GM12878 (cell line): ENCODE measurements at regions of chr2 and their contacts with region 1.

Region 1: DNA sequence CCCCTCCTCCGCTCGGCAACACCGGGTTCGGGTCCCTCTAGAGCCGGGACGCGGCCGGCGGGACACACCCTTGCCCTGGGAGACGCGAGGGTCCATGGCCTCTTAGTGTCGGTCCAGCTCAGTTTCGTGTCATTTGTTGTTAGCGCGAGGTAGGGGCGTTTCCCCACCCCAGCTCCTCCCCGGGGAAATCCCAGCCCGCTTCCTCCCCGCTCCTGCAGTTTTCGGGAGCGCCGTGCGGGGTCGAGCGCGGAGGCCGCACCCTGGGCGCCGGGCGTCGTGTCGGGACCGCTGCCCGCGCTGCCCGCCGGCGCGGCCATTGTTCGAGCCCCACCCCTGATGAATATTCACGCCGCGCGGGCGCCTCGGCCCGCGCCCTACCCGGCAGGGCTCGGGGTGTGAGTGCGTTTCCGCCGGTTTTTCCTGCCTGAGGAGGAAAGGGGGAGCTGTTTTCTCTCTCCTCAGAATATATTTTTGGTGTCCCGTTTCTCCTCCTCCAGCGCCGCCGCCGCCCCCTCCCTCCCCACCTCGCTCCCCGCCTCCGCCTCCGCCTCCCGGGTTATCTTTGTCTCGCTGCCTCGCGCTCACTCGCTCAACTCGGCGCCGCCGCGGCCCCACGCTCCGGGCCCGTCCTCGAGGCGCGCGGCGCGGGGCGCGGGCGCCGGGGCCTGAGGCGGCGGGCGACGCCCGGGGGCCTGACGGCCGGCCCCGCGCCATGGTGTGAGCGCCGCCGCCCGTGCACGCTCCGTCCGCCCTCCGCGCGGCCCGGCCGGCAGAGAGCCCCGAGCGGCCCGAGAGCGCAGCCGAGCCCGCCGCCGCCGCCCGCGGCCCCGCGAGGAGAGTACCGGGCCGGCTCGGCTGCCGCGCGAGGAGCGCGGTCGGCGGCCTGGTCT is at the start of gene MAP4K4:
- DNase-seq: no peak
- ATAC-seq: peak; percentile 68
- H3K4me3 ChIP-seq: peak within 1 kb of the TSS; percentile 49
- H3K27ac ChIP-seq: no peak within 1 kb of the TSS
- H3K4me1 ChIP-seq: no peaks in the 10 kb centered on the region; the same call in 1 of the 2 replicates
- H3K27me3 ChIP-seq: peaks cover 2 to 22% of the 10 kb centered on the region in 2 experiments; a peak in 3 of 4 replicates
- CTCF ChIP-seq: peak in 1 of 3 experiments; percentile 10; a peak in 1 of 6 replicates
- EP300 ChIP-seq: no peak
- POLR2A ChIP-seq: 0 out of 2 replicates have a peak, but pooled peaks have one; percentile 24
- RAD21 ChIP-seq: no peak
- polyA plus RNA-seq, gene MAP4K4: 1.9 to 2.5 TPM

Region 2: GRCh38 chr2:101341901-101342624 is 355.3 kb before region 1 on chr2:
- CTCF ChIA-PET with region 1: no interaction called
- POLR2A ChIA-PET with region 1: no interaction called
- RAD21 ChIA-PET with region 1: no interaction called
- SMC1A ChIA-PET with region 1: no interaction called
- in situ Hi-C with region 1: no loop called
- intact Hi-C with region 1: no loop called
- DNase-seq: no peak
- ATAC-seq: peak; percentile 83
- H3K4me3 ChIP-seq: no peak overlapping the region
- H3K27ac ChIP-seq: no peak overlapping the region
- H3K4me1 ChIP-seq: no peaks in the 10 kb centered on the region
- H3K27me3 ChIP-seq: no peaks in the 10 kb centered on the region; a peak in 1 of 4 replicates
- CTCF ChIP-seq: peak; percentile 78 to 88 (median 82)
- EP300 ChIP-seq: no peak
- POLR2A ChIP-seq: no peak
- RAD21 ChIP-seq: peak; percentile 71

Region 3: DNA sequence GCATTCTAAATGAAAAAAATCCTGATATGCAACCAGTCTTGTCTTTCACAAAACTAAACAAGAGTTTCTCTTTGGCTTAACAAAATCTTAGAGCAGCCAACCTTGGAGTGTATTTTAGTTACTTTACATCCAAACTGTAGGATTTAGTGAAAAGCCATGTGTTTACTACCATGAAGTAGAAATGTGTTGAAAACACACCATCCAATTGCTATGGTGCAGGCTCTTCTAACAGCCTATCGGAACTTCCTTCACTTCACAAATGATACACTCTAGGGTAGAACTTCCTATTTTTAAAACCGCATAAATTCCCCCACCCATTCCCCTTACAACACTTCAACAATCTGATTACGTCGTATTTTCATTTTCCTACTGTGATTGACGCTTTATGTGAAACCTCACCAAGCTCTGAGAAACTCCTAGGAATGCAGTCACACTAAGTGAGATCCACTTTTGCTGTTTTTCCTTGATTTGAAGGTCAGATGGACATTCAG is 74.3 kb before region 1 on chr2:
- CTCF ChIA-PET with region 1: no interaction called
- POLR2A ChIA-PET with region 1: no interaction called
- RAD21 ChIA-PET with region 1: interaction called, 6 read pairs
- SMC1A ChIA-PET with region 1: interaction called, 3 read pairs
- in situ Hi-C with region 1: no loop called
- intact Hi-C with region 1: loop called (anchors 5 kb)
- DNase-seq: peak; percentile 50
- ATAC-seq: peak; percentile 86
- H3K4me3 ChIP-seq: no peak overlapping the region; the same call in 1 of the 2 replicates
- H3K27ac ChIP-seq: peak overlapping the region; percentile 41; the same call in 1 of the 2 replicates
- H3K4me1 ChIP-seq: peaks cover 22% of the 10 kb centered on the region
- H3K27me3 ChIP-seq: no peaks in the 10 kb centered on the region
- CTCF ChIP-seq: no peak
- EP300 ChIP-seq: peak; percentile 74 to 84; a peak in 3 of 4 replicates
- POLR2A ChIP-seq: no peak
- RAD21 ChIP-seq: no peak

Region 4: GRCh38 chr2:101710471-101711318 is 13.3 kb after region 1 on chr2:
- CTCF ChIA-PET with region 1: no interaction called
- POLR2A ChIA-PET with region 1: no interaction called
- RAD21 ChIA-PET with region 1: interaction called, 9 read pairs
- SMC1A ChIA-PET with region 1: interaction called, 16 read pairs
- in situ Hi-C with region 1: no loop called
- intact Hi-C with region 1: no loop called
- DNase-seq: no peak
- ATAC-seq: peak; percentile 77
- H3K4me3 ChIP-seq: no peak overlapping the region
- H3K27ac ChIP-seq: no peak overlapping the region
- H3K4me1 ChIP-seq: peaks cover 11% of the 10 kb centered on the region
- H3K27me3 ChIP-seq: no peaks in the 10 kb centered on the region
- CTCF ChIP-seq: no peak
- EP300 ChIP-seq: no peak
- POLR2A ChIP-seq: no peak
- RAD21 ChIP-seq: no peak

Region 5: GRCh38 chr2:101717071-101717845 is 19.9 kb after region 1 on chr2:
- CTCF ChIA-PET with region 1: interaction called, 4 read pairs
- POLR2A ChIA-PET with region 1: interaction called, 4 read pairs
- RAD21 ChIA-PET with region 1: interaction called, 11 read pairs
- SMC1A ChIA-PET with region 1: interaction called, 25 read pairs
- in situ Hi-C with region 1: no loop called
- intact Hi-C with region 1: no loop called
- DNase-seq: peak; percentile 44
- ATAC-seq: peak; percentile 84
- H3K4me3 ChIP-seq: 0 out of 2 replicates have a peak overlapping the region, but pooled peaks have one; percentile 10
- H3K27ac ChIP-seq: no peak overlapping the region; the same call in 1 of the 2 replicates
- H3K4me1 ChIP-seq: peaks cover 21% of the 10 kb centered on the region
- H3K27me3 ChIP-seq: no peaks in the 10 kb centered on the region; a peak in 1 of 4 replicates
- CTCF ChIP-seq: no peak
- EP300 ChIP-seq: no peak
- POLR2A ChIP-seq: no peak
- RAD21 ChIP-seq: no peak

Region 6: DNA sequence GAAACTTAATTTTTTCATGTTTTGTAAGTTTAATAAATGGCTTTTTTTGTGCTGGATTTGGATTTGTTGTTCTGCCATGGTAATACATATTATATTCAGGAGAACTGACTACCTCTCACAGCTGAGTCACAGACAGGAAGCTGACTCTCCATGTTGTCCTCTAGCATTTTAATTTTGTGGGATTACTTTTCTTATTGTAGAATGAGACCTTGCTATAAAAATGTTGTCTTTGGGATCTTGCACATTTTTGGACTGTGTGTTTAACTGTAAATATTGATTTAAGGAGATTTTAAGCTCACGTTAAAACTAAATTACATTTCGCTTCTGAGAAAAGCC is 49.0 kb after region 1 on chr2:
- CTCF ChIA-PET with region 1: interaction called, 3 read pairs
- POLR2A ChIA-PET with region 1: interaction called, 3 read pairs
- RAD21 ChIA-PET with region 1: interaction called, 3 read pairs
- SMC1A ChIA-PET with region 1: interaction called, 16 read pairs
- in situ Hi-C with region 1: no loop called
- intact Hi-C with region 1: loop called (anchors 5 kb)
- DNase-seq: no peak
- ATAC-seq: no peak
- H3K4me3 ChIP-seq: no peak overlapping the region
- H3K27ac ChIP-seq: no peak overlapping the region
- H3K4me1 ChIP-seq: peaks cover 6% of the 10 kb centered on the region
- H3K27me3 ChIP-seq: no peaks in the 10 kb centered on the region; a peak in 1 of 4 replicates
- CTCF ChIP-seq: no peak
- EP300 ChIP-seq: no peak
- POLR2A ChIP-seq: no peak
- RAD21 ChIP-seq: no peak

Region 7: GRCh38 chr2:101860157-101860556 is 162.8 kb after region 1 on chr2:
- CTCF ChIA-PET with region 1: no interaction called
- POLR2A ChIA-PET with region 1: no interaction called
- RAD21 ChIA-PET with region 1: no interaction called
- SMC1A ChIA-PET with region 1: no interaction called
- in situ Hi-C with region 1: no loop called
- intact Hi-C with region 1: no loop called
- DNase-seq: no peak
- ATAC-seq: no peak
- H3K4me3 ChIP-seq: no peak overlapping the region
- H3K27ac ChIP-seq: no peak overlapping the region
- H3K4me1 ChIP-seq: no peaks in the 10 kb centered on the region
- H3K27me3 ChIP-seq: no peaks in the 10 kb centered on the region
- CTCF ChIP-seq: no peak; a peak in 1 of 6 replicates
- EP300 ChIP-seq: no peak
- POLR2A ChIP-seq: no peak
- RAD21 ChIP-seq: no peak

Region 8: GRCh38 chr2:102291318-102292251 is 594.2 kb after region 1 on chr2:
- CTCF ChIA-PET with region 1: no interaction called
- POLR2A ChIA-PET with region 1: no interaction called
- RAD21 ChIA-PET with region 1: no interaction called
- SMC1A ChIA-PET with region 1: no interaction called
- in situ Hi-C with region 1: no loop called
- intact Hi-C with region 1: no loop called
- DNase-seq: no peak
- ATAC-seq: no peak
- H3K4me3 ChIP-seq: no peak overlapping the region
- H3K27ac ChIP-seq: no peak overlapping the region
- H3K4me1 ChIP-seq: no peaks in the 10 kb centered on the region
- H3K27me3 ChIP-seq: no peaks in the 10 kb centered on the region; a peak in 3 of 4 replicates
- CTCF ChIP-seq: no peak
- EP300 ChIP-seq: no peak
- POLR2A ChIP-seq: no peak
- RAD21 ChIP-seq: no peak